ENCODE measurements at regions of chr10 and their contacts with region 1.

Region 1: GRCh38 chr10:12077580-12078180 is 8.9 kb downstream of the DHTKD1 start:
- DNase-seq: peak; percentile 36
- ATAC-seq: peak; percentile 71
- H3K4me3 Mint-ChIP-seq: peak overlapping the region; percentile 47
- H3K27ac Mint-ChIP-seq: peak overlapping the region; percentile 98
- H3K4me1 Mint-ChIP-seq: peaks cover 70% of the 10 kb centered on the region
- H3K27me3 Mint-ChIP-seq: no peaks in the 10 kb centered on the region
- CTCF ChIP-seq: no peak

Region 2: DNA sequence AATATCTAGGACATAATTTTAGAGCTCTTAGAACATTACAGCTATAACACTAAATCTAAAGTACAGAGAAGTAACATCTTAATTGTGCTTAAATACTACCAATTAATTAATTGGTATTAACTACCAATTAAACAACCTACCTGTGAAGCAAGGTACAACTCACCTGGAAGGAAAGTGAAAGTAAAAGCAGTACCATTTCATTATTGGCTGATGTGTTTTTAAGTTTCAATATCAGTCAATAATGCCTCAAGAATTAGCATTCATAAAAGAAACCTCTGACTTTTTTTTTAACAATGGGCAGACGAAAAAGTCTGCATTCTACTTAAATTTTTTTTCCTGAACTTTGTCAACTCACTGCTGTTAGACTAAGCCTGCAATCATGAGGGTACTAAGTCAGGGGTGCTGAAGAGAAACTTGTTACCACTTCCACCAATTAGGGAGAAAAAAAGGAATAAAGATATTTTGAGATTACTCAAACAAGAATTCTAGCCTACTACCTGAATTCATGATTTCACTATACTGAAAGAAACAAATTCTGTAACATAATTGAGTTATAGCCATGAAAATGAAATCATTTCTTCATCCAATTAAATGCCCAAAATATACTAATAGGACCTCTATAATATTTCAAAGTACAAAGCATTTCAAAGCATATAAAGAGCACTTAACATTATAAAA is 55.0 kb before region 1 on chr10:
- CTCF ChIA-PET with region 1: no interaction called
- POLR2A ChIA-PET with region 1: interaction called, 12 read pairs
- intact Hi-C with region 1: loop called (anchors 5 kb)
- DNase-seq: no peak
- ATAC-seq: peak; percentile 40
- H3K4me3 Mint-ChIP-seq: peak overlapping the region; percentile 28
- H3K27ac Mint-ChIP-seq: peak overlapping the region; percentile 78
- H3K4me1 Mint-ChIP-seq: peaks cover 40% of the 10 kb centered on the region
- H3K27me3 Mint-ChIP-seq: no peaks in the 10 kb centered on the region
- CTCF ChIP-seq: no peak

Region 3: GRCh38 chr10:12048547-12048946 is 29.1 kb before region 1 on chr10:
- CTCF ChIA-PET with region 1: interaction called, 3 read pairs
- POLR2A ChIA-PET with region 1: interaction called, 277 read pairs
- intact Hi-C with region 1: loop called (anchors 1 kb)
- DNase-seq: no peak
- ATAC-seq: no peak
- H3K4me3 Mint-ChIP-seq: no peak overlapping the region
- H3K27ac Mint-ChIP-seq: peak overlapping the region; percentile 67
- H3K4me1 Mint-ChIP-seq: peaks cover 52% of the 10 kb centered on the region
- H3K27me3 Mint-ChIP-seq: no peaks in the 10 kb centered on the region
- CTCF ChIP-seq: no peak

Region 4: DNA sequence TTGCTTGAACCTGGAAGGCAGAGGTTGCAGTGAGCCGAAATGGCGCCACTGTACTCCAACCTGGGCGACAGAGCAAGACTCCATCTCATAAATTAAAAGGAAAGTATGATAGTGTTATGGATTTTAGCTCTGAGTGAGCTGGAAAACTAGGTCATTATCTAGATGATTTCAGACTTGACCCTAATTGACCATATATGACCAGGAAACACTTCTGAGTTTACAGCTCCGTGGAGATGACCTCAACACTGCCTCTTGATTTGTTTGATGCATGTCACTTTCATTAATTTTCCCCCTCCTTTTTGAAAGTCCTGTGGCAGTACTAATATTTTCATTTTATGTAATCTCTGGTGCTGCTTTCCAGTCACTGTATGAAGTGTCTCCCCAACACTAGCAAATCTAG is 44.0 kb after region 1 on chr10:
- CTCF ChIA-PET with region 1: no interaction called
- POLR2A ChIA-PET with region 1: interaction called, 3 read pairs
- intact Hi-C with region 1: loop called (anchors 1 kb)
- DNase-seq: no peak
- ATAC-seq: no peak
- H3K4me3 Mint-ChIP-seq: peak overlapping the region; percentile 68
- H3K27ac Mint-ChIP-seq: peak overlapping the region; percentile 92
- H3K4me1 Mint-ChIP-seq: peaks cover 26% of the 10 kb centered on the region
- H3K27me3 Mint-ChIP-seq: no peaks in the 10 kb centered on the region
- CTCF ChIP-seq: no peak

Region 5: DNA sequence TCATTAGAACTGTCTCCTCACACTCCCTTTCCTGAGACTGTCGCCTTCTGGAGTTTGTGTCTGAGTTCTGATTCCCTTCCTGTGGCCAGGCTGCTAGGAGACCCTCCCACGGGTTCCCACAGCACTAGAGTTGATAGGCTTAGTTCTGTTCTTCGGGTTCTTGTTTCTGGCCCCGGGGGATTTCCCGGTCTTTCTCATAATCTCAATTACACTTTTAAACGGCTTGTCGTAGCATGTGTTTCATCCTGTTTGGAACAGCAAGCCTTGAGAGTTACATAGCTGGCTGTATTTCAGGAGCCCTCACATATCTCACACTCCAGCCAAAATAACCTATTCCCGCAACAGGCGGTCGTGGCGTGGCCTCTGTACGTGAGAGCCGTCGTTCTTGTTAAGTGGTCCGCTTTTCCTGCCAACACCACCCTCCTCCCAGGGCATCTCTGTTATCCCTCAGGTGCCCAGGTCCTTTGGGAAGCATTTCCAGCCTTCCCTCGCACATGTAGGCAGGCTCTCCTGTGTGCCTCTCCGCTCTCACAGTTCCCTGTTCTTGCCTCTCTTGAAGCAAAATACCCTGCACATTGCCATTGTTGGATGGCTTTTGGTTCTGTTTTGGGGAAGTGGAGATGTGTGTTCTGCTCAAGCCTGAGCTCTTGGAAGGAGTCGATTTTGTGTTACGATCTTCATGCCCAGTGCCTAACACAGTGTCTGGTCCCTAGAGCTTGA is 164.3 kb after region 1 on chr10:
- CTCF ChIA-PET with region 1: no interaction called
- POLR2A ChIA-PET with region 1: no interaction called
- intact Hi-C with region 1: loop called (anchors 2 kb)
- DNase-seq: no peak
- ATAC-seq: no peak
- H3K4me3 Mint-ChIP-seq: peak overlapping the region; percentile 29
- H3K27ac Mint-ChIP-seq: peak overlapping the region; percentile 75
- H3K4me1 Mint-ChIP-seq: peaks cover 69% of the 10 kb centered on the region
- H3K27me3 Mint-ChIP-seq: no peaks in the 10 kb centered on the region
- CTCF ChIP-seq: no peak

Measured in activated B cell treated with CpG ODN at 0.5 μM for 24 hours (primary cell).